ENCODE measurements at regions of chr4 and their contacts with region 1.

Region 1: GRCh38 chr4:27010334-27010940 is 149.8 kb downstream of the STIM2 start:
- DNase-seq: peak; percentile 69
- ATAC-seq: peak; percentile 86
- H3K4me3 Mint-ChIP-seq: no peak overlapping the region
- H3K27ac Mint-ChIP-seq: no peak overlapping the region
- H3K4me1 Mint-ChIP-seq: peaks cover 28% of the 10 kb centered on the region
- H3K27me3 Mint-ChIP-seq: no peaks in the 10 kb centered on the region
- CTCF ChIP-seq: peak; percentile 95

Region 2: DNA sequence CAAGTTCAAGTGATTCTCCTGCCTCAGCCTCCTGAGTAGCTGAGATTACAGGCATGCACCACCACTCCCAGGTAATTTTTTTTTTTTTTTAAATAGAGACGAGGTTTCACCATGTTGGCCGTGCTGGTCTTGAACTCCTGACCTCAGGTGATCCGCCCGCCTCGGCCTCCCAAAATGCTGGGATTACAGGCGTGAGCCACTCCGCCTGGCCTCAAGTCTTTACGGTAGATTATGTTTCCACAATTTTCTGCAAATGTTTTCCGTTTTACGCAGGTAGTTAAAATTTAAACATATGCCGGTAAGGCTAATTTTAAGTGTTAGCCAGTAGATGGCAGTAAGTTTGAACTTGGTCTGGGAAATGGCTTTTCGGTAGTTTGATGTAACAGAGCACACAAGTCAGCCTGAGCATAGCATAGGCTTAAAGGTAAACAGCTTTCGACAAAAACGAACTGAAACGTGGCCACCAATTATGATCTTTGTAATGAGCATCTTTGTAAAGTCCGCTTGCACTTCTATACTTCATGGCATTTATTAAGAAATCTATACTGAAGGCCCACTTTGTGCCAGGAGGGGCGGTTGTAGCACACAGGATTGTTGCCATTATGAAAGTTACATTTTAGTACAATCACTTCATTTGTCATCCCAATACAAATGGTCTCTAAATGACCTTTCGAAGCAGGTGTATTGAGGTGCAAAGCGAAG is 551.2 kb before region 1 on chr4:
- CTCF ChIA-PET with region 1: no interaction called
- POLR2A ChIA-PET with region 1: no interaction called
- intact Hi-C with region 1: loop called (anchors 5 kb)
- DNase-seq: no peak
- ATAC-seq: peak; percentile 67
- H3K4me3 Mint-ChIP-seq: peak overlapping the region; percentile 20
- H3K27ac Mint-ChIP-seq: no peak overlapping the region
- H3K4me1 Mint-ChIP-seq: peaks cover 16% of the 10 kb centered on the region
- H3K27me3 Mint-ChIP-seq: no peaks in the 10 kb centered on the region
- CTCF ChIP-seq: peak; percentile 33

Region 3: GRCh38 chr4:26719954-26720552 is 290.4 kb before region 1 on chr4:
- CTCF ChIA-PET with region 1: interaction called, 12 read pairs
- POLR2A ChIA-PET with region 1: no interaction called
- intact Hi-C with region 1: no loop called
- DNase-seq: no peak
- ATAC-seq: no peak
- H3K4me3 Mint-ChIP-seq: no peak overlapping the region
- H3K27ac Mint-ChIP-seq: no peak overlapping the region
- H3K4me1 Mint-ChIP-seq: peaks cover 18% of the 10 kb centered on the region
- H3K27me3 Mint-ChIP-seq: no peaks in the 10 kb centered on the region
- CTCF ChIP-seq: peak; percentile 58

Region 4: GRCh38 chr4:26787461-26788340 is 222.7 kb before region 1 on chr4:
- CTCF ChIA-PET with region 1: interaction called, 12 read pairs
- POLR2A ChIA-PET with region 1: no interaction called
- intact Hi-C with region 1: loop called (anchors 5 kb)
- DNase-seq: peak; percentile 83
- ATAC-seq: peak; percentile 95
- H3K4me3 Mint-ChIP-seq: no peak overlapping the region
- H3K27ac Mint-ChIP-seq: no peak overlapping the region
- H3K4me1 Mint-ChIP-seq: peaks cover 16% of the 10 kb centered on the region
- H3K27me3 Mint-ChIP-seq: no peaks in the 10 kb centered on the region
- CTCF ChIP-seq: no peak

Region 5: GRCh38 chr4:27066601-27067000 is 56.2 kb after region 1 on chr4:
- CTCF ChIA-PET with region 1: no interaction called
- POLR2A ChIA-PET with region 1: no interaction called
- intact Hi-C with region 1: no loop called
- DNase-seq: no peak
- ATAC-seq: no peak
- H3K4me3 Mint-ChIP-seq: no peak overlapping the region
- H3K27ac Mint-ChIP-seq: no peak overlapping the region
- H3K4me1 Mint-ChIP-seq: no peaks in the 10 kb centered on the region
- H3K27me3 Mint-ChIP-seq: peaks cover 6% of the 10 kb centered on the region
- CTCF ChIP-seq: no peak

Region 6: DNA sequence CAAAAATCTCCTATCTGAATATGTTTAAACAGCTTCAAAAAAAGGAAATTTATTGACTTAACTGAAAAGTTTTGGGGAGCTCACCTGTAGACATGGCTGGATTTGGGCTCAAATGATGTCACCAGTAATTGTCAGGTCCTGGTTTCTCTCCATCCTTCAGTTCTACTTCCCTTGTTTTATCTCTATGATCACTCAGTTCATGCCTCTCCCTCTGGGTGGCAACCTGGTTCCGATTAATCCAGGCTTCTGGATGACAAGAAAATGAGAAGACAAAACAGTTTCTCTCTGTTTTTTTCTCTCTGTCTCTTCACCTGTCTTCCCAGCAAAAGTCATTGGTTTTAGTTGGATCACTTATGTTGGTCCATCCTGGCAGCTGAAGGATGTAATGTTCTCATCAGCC is 127.8 kb after region 1 on chr4:
- CTCF ChIA-PET with region 1: no interaction called
- POLR2A ChIA-PET with region 1: no interaction called
- intact Hi-C with region 1: no loop called
- DNase-seq: no peak
- ATAC-seq: no peak
- H3K4me3 Mint-ChIP-seq: no peak overlapping the region
- H3K27ac Mint-ChIP-seq: no peak overlapping the region
- H3K4me1 Mint-ChIP-seq: no peaks in the 10 kb centered on the region
- H3K27me3 Mint-ChIP-seq: no peaks in the 10 kb centered on the region
- CTCF ChIP-seq: no peak

Measured in activated CD8-positive, alpha-beta T cell treated with anti-CD3 and anti-CD28 coated beads for 36 hours (primary cell).